ENCODE measurements at regions of chr17 and their contacts with region 1.

Region 1: DNA sequence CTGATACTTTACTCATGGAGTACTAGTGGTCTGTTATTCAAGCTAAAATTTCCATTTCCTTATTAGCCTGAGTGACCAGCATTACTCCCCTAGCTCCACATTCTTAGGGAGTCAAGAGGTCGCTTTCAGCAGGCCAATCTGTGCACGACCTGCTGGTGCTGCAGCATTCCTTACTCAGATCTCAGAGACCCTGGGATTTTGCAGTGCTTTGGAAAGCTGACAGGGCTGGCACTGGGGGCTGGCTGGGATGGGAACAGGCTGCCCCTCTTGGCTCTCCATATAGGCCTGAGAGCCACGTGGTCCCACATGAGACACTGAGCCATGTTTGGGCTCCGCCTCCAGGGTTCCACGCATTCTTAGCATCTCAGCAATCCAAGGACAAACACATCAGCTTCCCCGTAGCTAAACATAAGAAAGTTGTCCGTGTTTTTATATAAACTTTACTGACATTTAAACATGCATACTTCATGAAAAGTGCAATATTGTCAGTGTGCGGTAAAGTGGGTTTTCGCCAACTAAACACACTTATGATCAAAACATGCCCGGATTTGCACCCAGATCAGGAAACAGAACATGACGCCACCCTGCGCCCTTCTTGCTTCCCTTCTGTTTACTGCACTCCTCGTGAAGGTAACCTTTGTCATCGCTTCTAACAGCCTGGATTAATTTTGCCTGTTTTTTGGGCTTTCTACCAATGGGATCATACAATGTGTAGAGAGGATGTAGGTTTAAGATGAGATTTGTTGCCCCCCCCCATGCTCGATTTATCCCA is 254.5 kb upstream of the CACNG5 start:
- DNase-seq: no peak
- ATAC-seq: no peak
- H3K4me3 ChIP-seq: no peak overlapping the region
- H3K27ac ChIP-seq: no peak overlapping the region
- H3K4me1 ChIP-seq: no peaks in the 10 kb centered on the region
- H3K27me3 ChIP-seq: no peaks in the 10 kb centered on the region
- CTCF ChIP-seq: no peak

Region 2: GRCh38 chr17:66403846-66404556 is 176.4 kb before region 1 on chr17:
- CTCF ChIA-PET with region 1: no interaction called
- POLR2A ChIA-PET with region 1: interaction called, 40 read pairs
- intact Hi-C with region 1: no loop called
- DNase-seq: no peak
- ATAC-seq: no peak
- H3K4me3 ChIP-seq: no peak overlapping the region
- H3K27ac ChIP-seq: no peak overlapping the region
- H3K4me1 ChIP-seq: no peaks in the 10 kb centered on the region
- H3K27me3 ChIP-seq: no peaks in the 10 kb centered on the region
- CTCF ChIP-seq: no peak

Measured in PC-3 (cell line).